CD4-positive, alpha-beta T cell (primary cell): ENCODE measurements at regions of chr6 and their contacts with region 1.

Region 1: GRCh38 chr6:137754366-137754765 is 112.7 kb upstream of the TNFAIP3 start:
- DNase-seq: no peak
- ATAC-seq: no peak
- H3K4me3 ChIP-seq: no peak overlapping the region
- H3K4me3 Mint-ChIP-seq: no peak overlapping the region
- H3K27ac ChIP-seq: no peak overlapping the region
- H3K27ac Mint-ChIP-seq: no peak overlapping the region
- H3K4me1 ChIP-seq: no peaks in the 10 kb centered on the region
- H3K4me1 Mint-ChIP-seq: no peaks in the 10 kb centered on the region
- H3K27me3 ChIP-seq: no peaks in the 10 kb centered on the region
- H3K27me3 Mint-ChIP-seq: peaks cover 3% of the 10 kb centered on the region
- CTCF ChIP-seq: no peak

Region 2: DNA sequence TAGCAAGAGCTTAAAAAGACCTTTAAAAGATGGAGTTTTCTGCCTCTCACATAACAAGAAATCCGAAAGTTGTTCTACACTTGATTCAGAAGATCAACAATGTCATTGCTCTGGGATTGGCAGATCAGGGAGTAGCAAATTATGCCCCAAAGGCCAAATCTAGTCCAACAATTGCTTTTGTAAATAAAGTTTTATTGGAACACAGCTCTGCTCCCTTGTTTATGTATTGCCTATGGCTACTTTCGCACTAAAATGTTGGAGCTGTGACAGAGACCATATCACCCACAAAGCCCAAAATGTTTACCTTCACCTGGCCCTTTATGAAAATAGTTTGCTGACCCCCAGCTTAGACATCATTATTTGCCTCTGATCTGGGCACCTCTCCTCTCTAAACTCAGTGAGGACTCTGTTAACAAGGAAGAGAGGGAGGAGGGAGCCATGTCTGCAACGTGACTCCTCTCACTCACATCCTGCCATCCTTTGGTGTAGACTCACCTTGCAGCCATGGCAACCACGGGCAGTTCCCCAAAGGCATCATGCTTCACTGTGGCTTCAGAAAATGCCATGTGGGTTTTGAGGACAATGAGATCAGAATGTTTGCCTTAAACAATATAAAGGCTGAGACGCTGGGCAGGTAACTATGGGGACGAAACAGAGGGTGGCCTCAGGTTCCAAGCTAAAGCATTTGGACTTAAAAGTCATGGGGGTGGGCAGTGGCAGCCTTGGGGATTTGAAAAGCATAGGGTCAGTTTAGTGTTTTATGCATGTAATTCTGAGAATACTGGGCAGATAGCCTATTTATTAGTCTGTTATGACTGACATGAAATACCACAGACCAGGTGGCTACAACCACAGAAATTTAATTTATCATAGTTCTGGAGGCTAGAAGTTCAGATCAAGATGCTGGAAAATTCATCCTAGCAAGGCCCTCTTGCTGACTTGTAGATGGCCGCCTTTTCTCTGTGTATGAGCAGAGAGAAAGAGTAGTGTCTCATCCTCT is 37.0 kb before region 1 on chr6:
- CTCF ChIA-PET with region 1: interaction called, 3 read pairs
- POLR2A ChIA-PET with region 1: interaction called, 3 read pairs
- intact Hi-C with region 1: loop called in 1 of 2 experiments (anchors 5 kb)
- DNase-seq: peak; percentile 48 to 96 (median 70)
- ATAC-seq: peak; percentile 52
- H3K4me3 ChIP-seq: no peak overlapping the region
- H3K4me3 Mint-ChIP-seq: peak overlapping the region; percentile 71
- H3K27ac ChIP-seq: peak overlapping the region; percentile 59 to 72
- H3K27ac Mint-ChIP-seq: peak overlapping the region; percentile 91
- H3K4me1 ChIP-seq: peaks cover 23% of the 10 kb centered on the region
- H3K4me1 Mint-ChIP-seq: peaks cover 46% of the 10 kb centered on the region
- H3K27me3 ChIP-seq: no peaks in the 10 kb centered on the region
- H3K27me3 Mint-ChIP-seq: no peaks in the 10 kb centered on the region
- CTCF ChIP-seq: no peak

Region 3: DNA sequence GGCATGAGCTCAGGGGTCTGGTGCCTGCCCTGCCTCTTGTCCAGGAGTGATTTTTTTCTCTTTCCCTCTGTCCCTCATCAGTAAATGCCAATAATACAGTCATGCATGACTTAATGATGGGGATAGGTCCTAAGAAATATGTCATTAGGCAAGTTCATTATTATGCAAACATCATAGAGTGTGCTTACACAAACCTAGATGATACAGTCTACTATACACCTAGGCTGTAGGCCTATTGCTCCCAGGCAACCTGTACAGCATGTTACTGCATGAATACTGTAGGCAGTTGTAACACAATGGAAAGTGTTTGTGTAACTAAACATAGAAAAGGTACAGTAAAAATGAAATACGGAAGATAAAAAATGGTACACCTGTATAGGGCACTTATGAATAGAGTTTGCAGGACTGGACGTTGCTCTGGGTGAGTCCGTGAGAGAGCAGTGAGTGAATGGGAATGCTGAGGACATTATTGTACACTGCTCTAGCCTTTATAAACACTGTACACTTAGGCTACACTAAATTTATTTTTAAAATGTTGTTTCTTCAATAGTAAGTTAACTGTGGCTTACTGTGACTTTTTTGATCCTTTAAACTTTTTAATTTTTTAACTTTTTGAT is 441.9 kb after region 1 on chr6:
- CTCF ChIA-PET with region 1: no interaction called
- POLR2A ChIA-PET with region 1: no interaction called
- intact Hi-C with region 1: no loop called
- DNase-seq: no peak
- ATAC-seq: no peak
- H3K4me3 ChIP-seq: no peak overlapping the region
- H3K4me3 Mint-ChIP-seq: no peak overlapping the region
- H3K27ac ChIP-seq: no peak overlapping the region
- H3K27ac Mint-ChIP-seq: no peak overlapping the region
- H3K4me1 ChIP-seq: no peaks in the 10 kb centered on the region
- H3K4me1 Mint-ChIP-seq: no peaks in the 10 kb centered on the region
- H3K27me3 ChIP-seq: no peaks in the 10 kb centered on the region
- H3K27me3 Mint-ChIP-seq: peaks cover 30% of the 10 kb centered on the region
- CTCF ChIP-seq: no peak